ENCODE measurements at regions of chr13 and their contacts with region 1.

Region 1: GRCh38 chr13:77150651-77151050 is 123.7 kb upstream of the FBXL3 start:
- DNase-seq: no peak
- H3K4me3 Mint-ChIP-seq: no peak overlapping the region
- H3K27ac Mint-ChIP-seq: no peak overlapping the region
- H3K4me1 Mint-ChIP-seq: no peaks in the 10 kb centered on the region
- H3K27me3 Mint-ChIP-seq: no peaks in the 10 kb centered on the region
- CTCF ChIP-seq: no peak

Region 2: DNA sequence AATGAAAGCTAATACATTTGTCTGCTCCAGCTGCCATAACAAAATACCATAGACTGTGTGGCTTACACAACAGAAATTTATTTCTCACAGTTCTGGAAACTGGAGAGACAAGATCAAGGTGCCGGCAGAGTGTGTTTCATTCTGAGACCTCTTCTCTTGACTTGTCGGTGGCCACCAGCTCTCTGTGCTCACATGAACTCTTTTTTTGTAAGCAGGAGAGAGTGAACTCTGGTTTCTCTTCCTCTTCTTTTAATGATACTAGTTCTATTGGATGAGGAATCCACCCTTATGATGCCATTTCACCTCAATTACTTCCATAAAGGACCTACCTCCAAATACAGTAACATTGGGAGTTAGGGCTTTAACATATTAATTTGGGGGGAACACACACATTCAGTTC is 276.2 kb before region 1 on chr13:
- CTCF ChIA-PET with region 1: no interaction called
- intact Hi-C with region 1: no loop called
- DNase-seq: no peak
- H3K4me3 Mint-ChIP-seq: no peak overlapping the region
- H3K27ac Mint-ChIP-seq: no peak overlapping the region
- H3K4me1 Mint-ChIP-seq: no peaks in the 10 kb centered on the region
- H3K27me3 Mint-ChIP-seq: no peaks in the 10 kb centered on the region
- CTCF ChIP-seq: no peak

Region 3: DNA sequence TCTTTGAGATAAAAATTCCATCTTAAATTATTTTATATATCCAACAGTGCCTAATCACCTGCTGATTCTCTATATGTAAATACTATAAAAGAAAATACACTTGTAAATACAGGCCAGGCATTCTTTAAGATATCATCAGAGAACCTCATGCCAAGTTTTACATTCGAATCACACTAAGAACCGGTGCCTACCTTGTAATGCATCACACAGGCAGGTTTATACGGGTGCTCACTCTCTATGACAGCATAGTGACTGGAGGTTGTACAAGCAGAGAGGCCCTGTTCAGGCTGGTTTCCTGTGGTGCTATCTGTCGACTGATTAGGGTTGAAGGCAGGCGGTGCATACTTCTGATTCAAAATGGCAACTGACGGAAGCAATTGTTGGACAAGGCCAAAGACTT is 17.6 kb after region 1 on chr13:
- CTCF ChIA-PET with region 1: no interaction called
- intact Hi-C with region 1: loop called (anchors 1 kb)
- DNase-seq: no peak
- H3K4me3 Mint-ChIP-seq: no peak overlapping the region
- H3K27ac Mint-ChIP-seq: no peak overlapping the region
- H3K4me1 Mint-ChIP-seq: no peaks in the 10 kb centered on the region
- H3K27me3 Mint-ChIP-seq: no peaks in the 10 kb centered on the region
- CTCF ChIP-seq: no peak

Region 4: GRCh38 chr13:77184455-77184854 is 33.8 kb after region 1 on chr13:
- CTCF ChIA-PET with region 1: no interaction called
- intact Hi-C with region 1: no loop called
- DNase-seq: no peak
- H3K4me3 Mint-ChIP-seq: no peak overlapping the region
- H3K27ac Mint-ChIP-seq: no peak overlapping the region
- H3K4me1 Mint-ChIP-seq: no peaks in the 10 kb centered on the region
- H3K27me3 Mint-ChIP-seq: no peaks in the 10 kb centered on the region
- CTCF ChIP-seq: no peak

Region 5: GRCh38 chr13:77760893-77761292 is 610.2 kb after region 1 on chr13:
- CTCF ChIA-PET with region 1: no interaction called
- intact Hi-C with region 1: no loop called
- DNase-seq: no peak
- H3K4me3 Mint-ChIP-seq: no peak overlapping the region
- H3K27ac Mint-ChIP-seq: no peak overlapping the region
- H3K4me1 Mint-ChIP-seq: no peaks in the 10 kb centered on the region
- H3K27me3 Mint-ChIP-seq: no peaks in the 10 kb centered on the region
- CTCF ChIP-seq: no peak